ENCODE measurements at regions of chr15 and their contacts with region 1.

Region 1: GRCh38 chr15:90970274-90970673 is 15.6 kb downstream of the RCCD1 start:
- DNase-seq: no peak
- ATAC-seq: peak; percentile 37
- H3K4me3 ChIP-seq: no peak overlapping the region
- H3K27ac ChIP-seq: no peak overlapping the region
- H3K4me1 ChIP-seq: no peaks in the 10 kb centered on the region; a peak in 1 of 5 replicates
- H3K27me3 ChIP-seq: no peaks in the 10 kb centered on the region
- CTCF ChIP-seq: no peak
- EP300 ChIP-seq: no peak
- POLR2A ChIP-seq: no peak
- RAD21 ChIP-seq: peak; percentile 22 to 28; a peak in 2 of 4 replicates

Region 2: DNA sequence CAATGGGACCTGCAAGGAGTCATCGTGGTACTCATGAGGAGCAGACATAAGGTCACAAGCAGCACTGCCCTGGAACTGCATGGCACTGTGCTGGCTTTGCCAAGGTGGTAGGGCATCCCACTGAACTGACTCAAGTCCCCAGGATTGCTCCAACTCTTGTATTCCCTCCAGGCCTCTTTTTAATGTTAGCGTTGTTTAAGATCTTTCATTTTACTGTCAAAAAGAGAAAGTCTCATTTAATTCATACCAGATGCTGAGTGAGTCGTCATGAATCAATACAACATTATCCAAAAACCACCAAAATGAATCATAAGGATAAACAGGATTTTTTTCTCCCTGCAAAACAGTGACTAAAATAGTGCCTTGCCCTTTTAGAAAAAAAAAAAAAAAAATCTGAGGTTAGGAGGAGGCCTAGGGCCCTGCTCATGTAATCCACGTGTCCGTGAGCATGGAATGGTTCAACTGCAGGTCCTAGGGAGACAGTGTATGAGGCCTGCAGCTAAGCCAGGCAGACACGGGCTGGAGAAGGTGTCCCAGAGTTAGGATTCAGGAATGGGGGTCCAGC is 289.8 kb before region 1 on chr15:
- CTCF ChIA-PET with region 1: no interaction called
- POLR2A ChIA-PET with region 1: no interaction called
- in situ Hi-C with region 1: no loop called
- intact Hi-C with region 1: no loop called
- DNase-seq: no peak
- ATAC-seq: no peak
- H3K4me3 ChIP-seq: no peak overlapping the region
- H3K27ac ChIP-seq: no peak overlapping the region
- H3K4me1 ChIP-seq: peaks cover 4 to 10% of the 10 kb centered on the region in 2 experiments; a peak in 4 of 5 replicates
- H3K27me3 ChIP-seq: no peaks in the 10 kb centered on the region
- CTCF ChIP-seq: no peak
- EP300 ChIP-seq: no peak
- POLR2A ChIP-seq: no peak
- RAD21 ChIP-seq: no peak

Region 3: GRCh38 chr15:90701880-90702630 is 268.2 kb before region 1 on chr15:
- CTCF ChIA-PET with region 1: no interaction called
- POLR2A ChIA-PET with region 1: no interaction called
- in situ Hi-C with region 1: no loop called
- intact Hi-C with region 1: no loop called
- DNase-seq: peak in 1 of 4 experiments; percentile 31
- ATAC-seq: peak; percentile 65
- H3K4me3 ChIP-seq: no peak overlapping the region
- H3K27ac ChIP-seq: no peak overlapping the region
- H3K4me1 ChIP-seq: no peaks in the 10 kb centered on the region; a peak in 1 of 5 replicates
- H3K27me3 ChIP-seq: no peaks in the 10 kb centered on the region
- CTCF ChIP-seq: no peak
- EP300 ChIP-seq: no peak
- POLR2A ChIP-seq: no peak
- RAD21 ChIP-seq: peak in 1 of 2 experiments; percentile 43; a peak in 2 of 4 replicates

Region 4: DNA sequence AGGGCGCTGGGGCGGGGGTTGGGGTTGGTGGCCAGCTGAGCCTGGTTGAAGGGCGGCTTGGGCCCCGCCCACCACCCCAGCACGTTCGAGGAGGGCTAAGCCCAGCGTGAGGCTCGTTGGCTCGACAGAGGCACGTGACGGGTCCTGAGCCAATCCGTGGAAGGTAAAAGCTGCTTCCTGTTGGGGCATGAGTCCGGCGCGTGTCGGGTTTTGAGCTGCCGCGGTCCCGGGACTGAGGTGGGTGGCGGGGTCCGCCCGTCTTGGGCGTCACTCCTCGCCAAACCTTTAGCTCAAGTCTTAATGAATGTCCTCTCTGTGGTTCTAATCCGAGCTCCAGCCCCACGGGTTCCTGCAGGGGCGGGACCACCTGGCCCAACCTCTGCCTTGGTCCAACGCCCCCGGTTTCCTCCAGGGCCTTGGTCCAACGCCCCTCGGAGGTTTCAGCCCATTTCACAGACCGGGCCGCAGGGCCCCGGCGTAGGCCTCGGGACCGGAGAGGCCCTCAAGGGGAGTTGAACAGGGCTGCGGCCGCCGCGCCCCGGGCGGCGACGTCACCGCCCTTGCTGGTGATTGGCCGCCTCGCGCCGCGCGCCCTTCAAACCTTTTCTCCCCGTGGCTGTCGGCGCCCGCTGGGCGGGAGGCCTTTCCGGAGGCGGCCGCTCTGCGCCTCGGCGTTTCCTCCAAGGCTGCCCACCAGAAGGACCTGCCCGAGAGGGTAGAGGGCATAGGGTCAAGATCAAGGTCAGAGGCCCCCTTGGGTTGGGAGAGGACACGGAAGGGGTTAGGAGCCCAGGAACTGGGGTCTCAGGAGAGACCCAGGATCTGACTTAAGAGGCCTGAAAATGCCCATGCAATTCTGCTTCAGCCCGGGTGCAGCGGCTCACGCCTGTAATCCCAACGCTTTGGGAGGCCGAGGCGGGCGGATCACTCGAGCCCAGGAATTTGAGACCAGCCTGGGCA is 15.3 kb before region 1 on chr15 and contains the start of gene RCCD1:
- CTCF ChIA-PET with region 1: no interaction called
- POLR2A ChIA-PET with region 1: interaction called, 11 read pairs
- in situ Hi-C with region 1: no loop called
- intact Hi-C with region 1: no loop called
- DNase-seq: peak; percentile 97 to 98 (median 98)
- ATAC-seq: peak; percentile 96
- H3K4me3 ChIP-seq: peak within 1 kb of the TSS; percentile 50
- H3K27ac ChIP-seq: peak within 1 kb of the TSS; percentile 95
- H3K4me1 ChIP-seq: peaks cover 9 to 48% of the 10 kb centered on the region in 2 experiments; a peak in 4 of 5 replicates
- H3K27me3 ChIP-seq: no peaks in the 10 kb centered on the region
- CTCF ChIP-seq: no peak
- EP300 ChIP-seq: peak; percentile 21; the same call in 1 of the 2 replicates
- POLR2A ChIP-seq: peak; percentile 93
- RAD21 ChIP-seq: 0 out of 4 replicates have a peak, but pooled peaks of 1 of the 2 experiments have one; percentile 6
- polyA plus RNA-seq, gene RCCD1: 11.1 to 12.2 TPM

Region 5: DNA sequence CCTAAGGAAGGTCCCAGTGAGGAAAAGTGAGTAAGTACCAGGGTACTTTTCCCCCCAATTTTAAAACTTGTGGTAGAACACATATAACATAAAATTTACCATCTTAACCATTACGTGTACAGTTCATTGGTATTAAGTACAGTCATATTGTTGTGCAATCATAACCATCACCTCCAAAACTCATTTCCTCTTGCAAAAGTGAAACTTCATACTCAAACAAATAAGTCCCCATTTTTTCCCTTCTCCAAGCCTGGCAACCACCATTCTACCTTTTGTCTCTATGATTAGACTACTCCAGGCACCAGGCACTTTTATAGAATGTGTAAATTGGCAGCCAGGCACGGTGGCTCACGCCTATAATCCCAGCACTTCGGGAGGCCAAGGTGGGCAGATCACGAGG is 11.9 kb after region 1 on chr15:
- CTCF ChIA-PET with region 1: no interaction called
- POLR2A ChIA-PET with region 1: interaction called, 65 read pairs
- in situ Hi-C with region 1: no loop called
- intact Hi-C with region 1: no loop called
- DNase-seq: no peak
- ATAC-seq: no peak
- H3K4me3 ChIP-seq: no peak overlapping the region
- H3K27ac ChIP-seq: no peak overlapping the region
- H3K4me1 ChIP-seq: peaks cover under 1 to 4% of the 10 kb centered on the region in 2 experiments; a peak in 2 of 5 replicates
- H3K27me3 ChIP-seq: no peaks in the 10 kb centered on the region
- CTCF ChIP-seq: no peak
- EP300 ChIP-seq: no peak
- POLR2A ChIP-seq: no peak
- RAD21 ChIP-seq: no peak

Measured in K562 (cell line).